ENCODE measurements at regions of chr10 and their contacts with region 1.

Region 1: GRCh38 chr10:52818019-52818418 is 45.4 kb upstream of the MBL2 start:
- H3K4me3 ChIP-seq: no peak overlapping the region
- H3K27ac ChIP-seq: no peak overlapping the region
- H3K4me1 ChIP-seq: no peaks in the 10 kb centered on the region
- CTCF ChIP-seq: peak; percentile 20; the same call in 1 of the 2 replicates

Region 2: GRCh38 chr10:52883996-52884871 is 66.2 kb after region 1 on chr10:
- CTCF ChIA-PET with region 1: interaction called, 21 read pairs
- POLR2A ChIA-PET with region 1: no interaction called
- H3K4me3 ChIP-seq: peak overlapping the region; percentile 15
- H3K27ac ChIP-seq: no peak overlapping the region
- H3K4me1 ChIP-seq: no peaks in the 10 kb centered on the region
- CTCF ChIP-seq: peak; percentile 48; the same call in 1 of the 2 replicates